ENCODE measurements at regions of chr11 and their contacts with region 1.

Region 1: GRCh38 chr11:118224511-118225188 is at the start of gene JAML:
- DNase-seq: peak; percentile 51
- H3K4me3 ChIP-seq: no peak within 1 kb of the TSS
- H3K27ac ChIP-seq: no peak within 1 kb of the TSS
- H3K4me1 ChIP-seq: peaks cover 21% of the 10 kb centered on the region
- CTCF ChIP-seq: no peak
- total RNA-seq, gene JAML: 0.73 and 1.4 TPM in 2 replicates

Region 2: GRCh38 chr11:117870103-117870952 is 354.3 kb before region 1 on chr11:
- CTCF ChIA-PET with region 1: no interaction called
- POLR2A ChIA-PET with region 1: no interaction called
- intact Hi-C with region 1: no loop called
- DNase-seq: no peak
- H3K4me3 ChIP-seq: no peak overlapping the region
- H3K27ac ChIP-seq: no peak overlapping the region
- H3K4me1 ChIP-seq: no peaks in the 10 kb centered on the region
- CTCF ChIP-seq: no peak

Region 3: GRCh38 chr11:118214210-118214914 is 10.3 kb before region 1 on chr11:
- CTCF ChIA-PET with region 1: interaction called, 9 read pairs
- POLR2A ChIA-PET with region 1: interaction called, 13 read pairs
- intact Hi-C with region 1: no loop called
- DNase-seq: peak; percentile 51
- H3K4me3 ChIP-seq: peak overlapping the region; percentile 33
- H3K27ac ChIP-seq: peak overlapping the region; percentile 24
- H3K4me1 ChIP-seq: peaks cover 45% of the 10 kb centered on the region
- CTCF ChIP-seq: no peak

Region 4: GRCh38 chr11:118240999-118241768 is 16.5 kb after region 1 on chr11:
- CTCF ChIA-PET with region 1: no interaction called
- POLR2A ChIA-PET with region 1: no interaction called
- intact Hi-C with region 1: no loop called
- DNase-seq: no peak
- H3K4me3 ChIP-seq: no peak overlapping the region
- H3K27ac ChIP-seq: no peak overlapping the region
- H3K4me1 ChIP-seq: no peaks in the 10 kb centered on the region
- CTCF ChIP-seq: no peak